ENCODE measurements at regions of chr2 and their contacts with region 1.

Region 1: GRCh38 chr2:61426267-61426897 is 44.5 kb downstream of the USP34 start:
- DNase-seq: peak; percentile 67 to 76 (median 71)
- H3K4me3 ChIP-seq: no peak overlapping the region
- H3K4me3 Mint-ChIP-seq: peak overlapping the region in 4 of 8 donors; percentile 4 to 54 (median 40)
- H3K27ac ChIP-seq: peak overlapping the region; percentile 19
- H3K27ac Mint-ChIP-seq: peak overlapping the region; percentile 73 to 91 (median 89)
- H3K4me1 ChIP-seq: peaks cover 57% of the 10 kb centered on the region
- H3K4me1 Mint-ChIP-seq: peaks cover 49 to 74% (median 66%) of the 10 kb centered on the region in 4 donors
- H3K27me3 ChIP-seq: no peaks in the 10 kb centered on the region
- H3K27me3 Mint-ChIP-seq: no peaks in the 10 kb centered on the region

Region 2: GRCh38 chr2:61439241-61440002 is 13.0 kb after region 1 on chr2:
- CTCF ChIA-PET with region 1: interaction called, 11 read pairs
- POLR2A ChIA-PET with region 1: no interaction called
- intact Hi-C with region 1: no loop called
- DNase-seq: no peak
- H3K4me3 ChIP-seq: no peak overlapping the region
- H3K4me3 Mint-ChIP-seq: peak overlapping the region in 3 of 8 donors; percentile 2 to 47 (median 47)
- H3K27ac ChIP-seq: no peak overlapping the region
- H3K27ac Mint-ChIP-seq: peak overlapping the region in 5 of 7 donors; percentile 12 to 50 (median 16)
- H3K4me1 ChIP-seq: peaks cover 56% of the 10 kb centered on the region
- H3K4me1 Mint-ChIP-seq: peaks cover 59 to 83% (median 70%) of the 10 kb centered on the region in 4 donors
- H3K27me3 ChIP-seq: no peaks in the 10 kb centered on the region
- H3K27me3 Mint-ChIP-seq: no peaks in the 10 kb centered on the region

Region 3: DNA sequence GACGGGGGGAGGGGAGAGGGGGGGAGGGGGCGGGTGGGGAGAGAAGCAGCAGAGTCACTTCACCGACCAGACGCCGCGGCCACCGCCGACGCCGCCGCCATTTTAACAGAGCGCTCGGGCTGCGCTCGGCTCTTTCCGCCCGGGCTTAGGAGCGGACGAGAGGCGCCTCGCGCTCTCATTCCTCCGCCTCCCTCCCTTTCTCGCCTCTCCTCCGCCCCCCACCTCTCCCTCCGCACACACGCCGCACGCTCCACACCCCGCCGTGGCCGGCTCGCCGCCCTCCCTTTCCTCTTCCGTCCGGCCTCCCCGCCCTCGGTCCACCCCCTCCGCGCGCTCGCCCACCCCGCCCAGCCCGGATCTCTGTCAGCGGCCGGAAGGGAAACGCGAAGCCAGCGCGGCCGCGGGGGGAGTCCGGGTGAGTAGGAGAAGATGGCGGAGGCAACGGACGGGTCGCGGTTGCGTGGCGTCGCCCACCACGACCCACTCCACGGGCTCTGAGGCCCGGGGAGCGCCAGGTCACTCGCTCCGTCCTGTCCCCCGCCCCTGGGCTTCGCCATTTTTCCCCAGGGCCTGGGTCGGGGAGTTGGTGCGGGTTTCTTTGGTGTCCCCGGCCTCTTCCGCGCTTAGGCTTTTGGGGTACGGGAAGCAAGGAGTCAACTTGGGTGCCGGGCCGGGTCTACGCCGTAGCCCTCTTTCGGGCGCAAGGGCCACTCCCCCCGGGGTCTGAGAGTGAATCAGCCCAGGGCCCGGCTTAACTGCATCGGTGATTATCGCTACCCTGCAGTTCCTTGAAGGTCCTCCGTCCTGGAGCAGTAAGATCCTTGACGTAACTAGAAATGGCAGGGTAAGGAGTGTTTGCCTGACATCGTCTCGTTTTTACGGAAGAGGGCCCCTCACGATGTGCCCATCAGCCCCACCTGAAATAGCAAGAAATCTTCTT is 44.9 kb after region 1 on chr2 and contains the start of gene USP34:
- CTCF ChIA-PET with region 1: interaction called, 10 read pairs
- POLR2A ChIA-PET with region 1: interaction called, 3 read pairs
- intact Hi-C with region 1: loop called (anchors 1 kb)
- DNase-seq: peak; percentile 89 to 95 (median 92)
- H3K4me3 ChIP-seq: peak within 1 kb of the TSS; percentile 68 to 89
- H3K4me3 Mint-ChIP-seq: peak within 1 kb of the TSS; percentile 92 to 98 (median 95)
- H3K27ac ChIP-seq: peak within 1 kb of the TSS; percentile 98
- H3K27ac Mint-ChIP-seq: peak within 1 kb of the TSS; percentile 93 to 100 (median 99)
- H3K4me1 ChIP-seq: peaks cover 41% of the 10 kb centered on the region
- H3K4me1 Mint-ChIP-seq: peaks cover 12 to 46% (median 29%) of the 10 kb centered on the region in 4 donors
- H3K27me3 ChIP-seq: no peaks in the 10 kb centered on the region
- H3K27me3 Mint-ChIP-seq: no peaks in the 10 kb centered on the region
- total RNA-seq, gene USP34: 163 to 164 TPM

Region 4: GRCh38 chr2:61633250-61633649 is 206.9 kb after region 1 on chr2:
- CTCF ChIA-PET with region 1: interaction called, 11 read pairs
- POLR2A ChIA-PET with region 1: no interaction called
- intact Hi-C with region 1: loop called (anchors 5 kb)
- DNase-seq: no peak
- H3K4me3 ChIP-seq: no peak overlapping the region
- H3K4me3 Mint-ChIP-seq: no peak overlapping the region
- H3K27ac ChIP-seq: no peak overlapping the region
- H3K27ac Mint-ChIP-seq: no peak overlapping the region
- H3K4me1 ChIP-seq: no peaks in the 10 kb centered on the region
- H3K4me1 Mint-ChIP-seq: no peaks in the 10 kb centered on the region
- H3K27me3 ChIP-seq: no peaks in the 10 kb centered on the region
- H3K27me3 Mint-ChIP-seq: peaks cover 0 to 2% of the 10 kb centered on the region in 2 donors

Region 5: GRCh38 chr2:61694312-61695274 is 268.2 kb after region 1 on chr2:
- CTCF ChIA-PET with region 1: no interaction called
- POLR2A ChIA-PET with region 1: no interaction called
- intact Hi-C with region 1: no loop called
- DNase-seq: peak; percentile 74 to 82 (median 77)
- H3K4me3 ChIP-seq: peak overlapping the region; percentile 43 to 83
- H3K4me3 Mint-ChIP-seq: peak overlapping the region; percentile 89 to 95 (median 93)
- H3K27ac ChIP-seq: peak overlapping the region; percentile 46
- H3K27ac Mint-ChIP-seq: peak overlapping the region; percentile 74 to 96 (median 89)
- H3K4me1 ChIP-seq: peaks cover 15% of the 10 kb centered on the region
- H3K4me1 Mint-ChIP-seq: peaks cover 6 to 16% (median 12%) of the 10 kb centered on the region in 4 donors
- H3K27me3 ChIP-seq: no peaks in the 10 kb centered on the region
- H3K27me3 Mint-ChIP-seq: no peaks in the 10 kb centered on the region

Region 6: GRCh38 chr2:61789807-61790602 is 363.6 kb after region 1 on chr2:
- CTCF ChIA-PET with region 1: interaction called, 11 read pairs
- POLR2A ChIA-PET with region 1: no interaction called
- intact Hi-C with region 1: loop called (anchors 1 kb)
- DNase-seq: no peak
- H3K4me3 ChIP-seq: no peak overlapping the region
- H3K4me3 Mint-ChIP-seq: no peak overlapping the region
- H3K27ac ChIP-seq: no peak overlapping the region
- H3K27ac Mint-ChIP-seq: no peak overlapping the region
- H3K4me1 ChIP-seq: no peaks in the 10 kb centered on the region
- H3K4me1 Mint-ChIP-seq: peaks cover 3 to 6% (median 5%) of the 10 kb centered on the region in 4 donors
- H3K27me3 ChIP-seq: no peaks in the 10 kb centered on the region
- H3K27me3 Mint-ChIP-seq: peaks cover 2% of the 10 kb centered on the region in 2 donors